IMR-90 (cell line): ENCODE measurements at regions of chr2 and their contacts with region 1.

Region 1: GRCh38 chr2:206143451-206143850 is 15.8 kb downstream of the NDUFS1 start:
- DNase-seq: no peak
- ATAC-seq: no peak
- H3K4me3 ChIP-seq: no peak overlapping the region
- H3K27ac ChIP-seq: no peak overlapping the region
- H3K4me1 ChIP-seq: no peaks in the 10 kb centered on the region
- H3K27me3 ChIP-seq: no peaks in the 10 kb centered on the region
- CTCF ChIP-seq: no peak
- POLR2A ChIP-seq: no peak
- RAD21 ChIP-seq: no peak

Region 2: GRCh38 chr2:206112846-206113547 is 30.5 kb before region 1 on chr2:
- CTCF ChIA-PET with region 1: no interaction called
- POLR2A ChIA-PET with region 1: interaction called, 10 read pairs
- dilution Hi-C with region 1: no loop called
- in situ Hi-C with region 1: no loop called
- intact Hi-C with region 1: no loop called
- DNase-seq: peak; percentile 45
- ATAC-seq: peak; percentile 31
- H3K4me3 ChIP-seq: no peak overlapping the region
- H3K27ac ChIP-seq: no peak overlapping the region
- H3K4me1 ChIP-seq: peaks cover 2% of the 10 kb centered on the region
- H3K27me3 ChIP-seq: no peaks in the 10 kb centered on the region
- CTCF ChIP-seq: no peak
- POLR2A ChIP-seq: no peak
- RAD21 ChIP-seq: no peak